Activated B cell treated with CpG ODN at 0.5 μM for 24 hours (primary cell): ENCODE measurements at regions of chr10 and their contacts with region 1.

Region 1: DNA sequence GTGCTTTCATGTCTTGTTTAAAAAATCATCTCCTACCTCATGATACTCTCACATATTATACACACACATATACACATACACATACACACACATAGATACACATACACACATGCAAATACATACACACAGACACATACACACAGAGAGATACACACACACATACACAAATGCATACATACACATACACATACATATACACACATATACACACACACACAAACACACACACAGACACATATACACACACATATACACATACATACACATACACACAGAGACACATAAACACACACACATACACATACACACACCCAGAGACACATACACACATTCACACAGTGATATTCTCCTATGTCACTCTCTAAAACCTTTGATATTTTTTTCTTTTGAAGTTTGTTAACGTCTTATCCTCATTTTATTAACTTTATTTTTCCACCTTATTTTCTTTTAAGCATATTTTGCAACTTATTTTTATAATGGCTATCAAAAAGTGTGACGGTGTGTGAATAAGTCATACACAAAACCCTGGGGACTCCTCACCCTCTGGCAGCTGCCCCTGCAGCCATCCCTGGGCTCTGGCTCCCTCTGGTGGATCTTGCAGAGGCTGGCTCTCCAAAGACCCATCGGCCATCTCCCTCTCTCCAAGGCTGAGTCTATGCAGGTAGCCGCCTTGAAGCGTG is 3.9 kb upstream of the C10orf120 start:
- DNase-seq: peak; percentile 23
- ATAC-seq: peak; percentile 49
- H3K4me3 Mint-ChIP-seq: no peak overlapping the region
- H3K27ac Mint-ChIP-seq: no peak overlapping the region
- H3K4me1 Mint-ChIP-seq: no peaks in the 10 kb centered on the region
- H3K27me3 Mint-ChIP-seq: peaks cover 6% of the 10 kb centered on the region
- CTCF ChIP-seq: no peak

Region 2: GRCh38 chr10:122142641-122143237 is 560.8 kb before region 1 on chr10:
- CTCF ChIA-PET with region 1: interaction called, 3 read pairs
- POLR2A ChIA-PET with region 1: no interaction called
- intact Hi-C with region 1: loop called (anchors 2 kb)
- DNase-seq: peak; percentile 26
- ATAC-seq: no peak
- H3K4me3 Mint-ChIP-seq: no peak overlapping the region
- H3K27ac Mint-ChIP-seq: no peak overlapping the region
- H3K4me1 Mint-ChIP-seq: no peaks in the 10 kb centered on the region
- H3K27me3 Mint-ChIP-seq: peaks cover 8% of the 10 kb centered on the region
- CTCF ChIP-seq: no peak

Region 3: GRCh38 chr10:122298598-122299301 is 404.8 kb before region 1 on chr10:
- CTCF ChIA-PET with region 1: interaction called, 11 read pairs
- POLR2A ChIA-PET with region 1: no interaction called
- intact Hi-C with region 1: loop called (anchors 1 kb)
- DNase-seq: peak; percentile 48
- ATAC-seq: peak; percentile 89
- H3K4me3 Mint-ChIP-seq: no peak overlapping the region
- H3K27ac Mint-ChIP-seq: no peak overlapping the region
- H3K4me1 Mint-ChIP-seq: peaks cover 2% of the 10 kb centered on the region
- H3K27me3 Mint-ChIP-seq: peaks cover 13% of the 10 kb centered on the region
- CTCF ChIP-seq: no peak

Region 4: DNA sequence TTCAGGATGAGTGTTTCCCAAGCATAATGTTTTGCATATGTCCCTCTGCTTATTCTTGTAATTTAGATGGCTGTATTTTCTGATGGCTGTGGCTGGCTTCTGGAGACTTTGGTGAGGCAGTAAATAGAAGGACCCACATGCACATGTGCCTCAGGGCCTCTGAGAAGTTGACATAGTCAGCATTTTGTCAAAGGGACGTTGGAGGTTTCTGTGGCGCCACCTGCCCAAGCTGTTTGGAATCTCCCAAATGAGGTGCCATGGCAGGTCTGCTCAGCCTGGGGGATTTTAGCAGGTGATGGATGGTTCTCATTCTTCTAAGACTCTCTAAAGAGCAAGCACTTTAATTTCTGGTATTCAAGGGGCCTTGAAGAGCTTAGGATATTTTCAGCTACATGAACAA is 33.7 kb before region 1 on chr10:
- CTCF ChIA-PET with region 1: no interaction called
- POLR2A ChIA-PET with region 1: no interaction called
- intact Hi-C with region 1: no loop called
- DNase-seq: no peak
- ATAC-seq: no peak
- H3K4me3 Mint-ChIP-seq: no peak overlapping the region
- H3K27ac Mint-ChIP-seq: no peak overlapping the region
- H3K4me1 Mint-ChIP-seq: no peaks in the 10 kb centered on the region
- H3K27me3 Mint-ChIP-seq: peaks cover 5% of the 10 kb centered on the region
- CTCF ChIP-seq: no peak

Region 5: GRCh38 chr10:122798751-122799150 is 95.2 kb after region 1 on chr10:
- CTCF ChIA-PET with region 1: no interaction called
- POLR2A ChIA-PET with region 1: no interaction called
- intact Hi-C with region 1: no loop called
- DNase-seq: no peak
- ATAC-seq: no peak
- H3K4me3 Mint-ChIP-seq: no peak overlapping the region
- H3K27ac Mint-ChIP-seq: no peak overlapping the region
- H3K4me1 Mint-ChIP-seq: no peaks in the 10 kb centered on the region
- H3K27me3 Mint-ChIP-seq: peaks cover 19% of the 10 kb centered on the region
- CTCF ChIP-seq: no peak

Region 6: DNA sequence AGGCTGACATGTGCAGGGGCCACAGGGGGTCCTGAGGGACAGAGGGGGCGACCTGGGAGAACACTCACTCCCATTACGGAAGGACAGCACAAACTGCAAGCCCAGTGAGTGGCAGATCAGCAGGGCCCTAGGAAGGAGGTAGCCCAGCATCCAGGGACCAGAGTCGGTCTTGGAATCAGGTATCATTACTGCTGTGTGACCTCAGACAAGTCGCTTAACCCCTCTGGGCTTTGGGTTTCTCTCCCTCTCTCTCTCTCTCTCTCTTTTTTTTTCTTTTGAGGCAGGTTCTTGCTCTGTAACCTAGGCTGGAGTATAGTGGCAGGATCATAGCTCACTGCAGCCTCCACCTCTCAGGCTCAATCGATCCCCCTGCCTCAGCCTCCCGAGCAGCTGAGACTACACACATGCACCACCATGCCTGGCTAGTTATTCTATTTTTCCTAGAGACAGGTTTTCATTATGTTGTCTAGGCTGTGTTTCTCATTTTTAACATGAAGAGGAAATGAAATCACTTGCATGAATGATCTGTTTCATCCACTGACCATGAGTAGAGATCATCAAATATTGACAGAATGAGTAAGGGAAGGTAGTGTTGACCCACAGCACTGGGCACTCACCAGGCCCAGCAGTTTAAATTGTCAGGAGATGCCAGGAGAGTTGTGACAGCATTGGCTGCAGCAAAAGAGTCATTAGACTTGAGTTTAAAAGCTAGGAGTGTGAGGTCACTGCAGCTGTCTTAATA is 500.0 kb after region 1 on chr10:
- CTCF ChIA-PET with region 1: no interaction called
- POLR2A ChIA-PET with region 1: no interaction called
- intact Hi-C with region 1: no loop called
- DNase-seq: no peak
- ATAC-seq: no peak
- H3K4me3 Mint-ChIP-seq: no peak overlapping the region
- H3K27ac Mint-ChIP-seq: no peak overlapping the region
- H3K4me1 Mint-ChIP-seq: peaks cover 18% of the 10 kb centered on the region
- H3K27me3 Mint-ChIP-seq: no peaks in the 10 kb centered on the region
- CTCF ChIP-seq: no peak